Activated T-helper 2 cell treated with anti-CD3 and anti-CD28 coated beads, Interferon-gamma antibody, Interleukin-2, Interleukin-4, amounts not matched to agents 10 μg/mL and 5 μg/mL and 100 μg/mL, durations not matched to agents 14 hours and 24 hours and 36 hours (primary cell): ENCODE measurements at regions of chr19 and their contacts with region 1.

Region 1: DNA sequence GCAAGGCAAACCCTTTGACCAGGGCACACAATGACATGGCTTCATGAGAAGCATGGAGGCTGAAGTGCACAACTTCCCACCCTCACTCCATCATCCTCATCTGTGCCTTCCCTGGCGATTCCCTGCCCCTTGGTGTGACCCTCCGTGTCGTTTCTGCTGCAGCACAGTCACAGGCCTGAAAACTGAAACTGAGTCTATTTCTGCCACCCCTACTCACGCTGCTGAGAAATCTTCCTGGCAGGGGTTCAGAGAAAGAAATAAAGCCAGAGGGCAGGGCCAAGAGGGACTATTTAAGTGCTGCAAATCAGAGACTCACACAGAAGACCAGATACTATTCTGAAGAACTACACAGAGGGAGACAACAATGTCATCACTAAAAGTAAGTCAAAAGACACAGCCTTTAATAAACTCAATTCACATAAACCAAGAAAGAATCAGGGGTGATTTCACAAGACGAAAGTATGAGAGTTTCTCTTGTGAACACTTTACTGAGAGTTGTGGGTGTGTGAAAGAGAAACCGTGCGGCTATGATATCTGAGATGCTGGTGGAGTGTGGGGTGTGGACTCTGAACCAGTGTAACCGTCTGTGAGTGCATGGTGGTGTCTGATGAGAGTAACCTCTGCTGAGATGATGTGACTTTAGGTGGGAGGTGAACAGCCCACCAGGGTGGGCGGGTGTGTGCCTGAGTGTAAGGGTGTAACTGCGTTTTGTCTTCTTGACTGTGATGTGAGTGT is 23.5 kb downstream of the LGALS16 start:
- DNase-seq: peak; percentile 46
- H3K4me3 Mint-ChIP-seq: peak overlapping the region; percentile 55
- H3K27ac Mint-ChIP-seq: peak overlapping the region; percentile 56
- H3K4me1 Mint-ChIP-seq: peaks cover 39% of the 10 kb centered on the region
- H3K27me3 Mint-ChIP-seq: peaks cover 7% of the 10 kb centered on the region

Region 2: GRCh38 chr19:39704181-39705044 is 25.2 kb after region 1 on chr19 and contains the start of gene LGALS14:
- intact Hi-C with region 1: loop called (anchors 1 kb)
- DNase-seq: no peak
- H3K4me3 Mint-ChIP-seq: no peak within 1 kb of the TSS
- H3K27ac Mint-ChIP-seq: peak within 1 kb of the TSS; percentile 56
- H3K4me1 Mint-ChIP-seq: peaks cover 20% of the 10 kb centered on the region
- H3K27me3 Mint-ChIP-seq: peaks cover 19% of the 10 kb centered on the region
- total RNA-seq, gene LGALS14: not detected in 2 replicates

Region 3: DNA sequence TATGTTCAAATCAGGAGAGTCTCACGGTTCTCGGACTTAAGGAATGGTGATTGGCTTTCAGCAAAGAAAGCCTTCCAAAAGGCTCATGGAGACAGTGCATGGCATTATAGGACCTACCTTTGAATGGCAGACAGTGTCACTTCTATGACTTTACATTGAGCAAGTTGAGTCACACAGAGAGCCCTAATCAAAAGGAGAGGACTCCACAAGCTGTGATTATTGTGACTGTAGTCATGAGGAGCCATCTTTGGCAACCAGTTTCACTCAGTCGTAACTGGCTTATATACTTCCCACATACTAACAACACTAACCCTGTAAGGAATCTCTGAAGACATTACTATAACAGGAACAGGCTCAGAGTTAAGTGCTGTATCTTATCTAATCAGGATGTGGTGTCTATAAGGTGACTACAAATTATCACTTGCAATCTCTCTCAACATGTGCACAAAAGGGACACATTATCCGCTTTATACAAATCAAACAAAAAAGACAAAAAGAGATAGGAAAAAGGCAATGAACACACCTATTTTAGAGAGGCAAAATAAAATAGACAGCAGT is 31.2 kb after region 1 on chr19:
- intact Hi-C with region 1: loop called (anchors 2 kb)
- DNase-seq: no peak
- H3K4me3 Mint-ChIP-seq: no peak overlapping the region
- H3K27ac Mint-ChIP-seq: no peak overlapping the region
- H3K4me1 Mint-ChIP-seq: peaks cover 25% of the 10 kb centered on the region
- H3K27me3 Mint-ChIP-seq: peaks cover 13% of the 10 kb centered on the region

Region 4: GRCh38 chr19:39740395-39740794 is 61.2 kb after region 1 on chr19:
- intact Hi-C with region 1: loop called (anchors 1 kb)
- DNase-seq: no peak
- H3K4me3 Mint-ChIP-seq: peak overlapping the region; percentile 42
- H3K27ac Mint-ChIP-seq: peak overlapping the region; percentile 15
- H3K4me1 Mint-ChIP-seq: peaks cover 42% of the 10 kb centered on the region
- H3K27me3 Mint-ChIP-seq: peaks cover 9% of the 10 kb centered on the region

Region 5: DNA sequence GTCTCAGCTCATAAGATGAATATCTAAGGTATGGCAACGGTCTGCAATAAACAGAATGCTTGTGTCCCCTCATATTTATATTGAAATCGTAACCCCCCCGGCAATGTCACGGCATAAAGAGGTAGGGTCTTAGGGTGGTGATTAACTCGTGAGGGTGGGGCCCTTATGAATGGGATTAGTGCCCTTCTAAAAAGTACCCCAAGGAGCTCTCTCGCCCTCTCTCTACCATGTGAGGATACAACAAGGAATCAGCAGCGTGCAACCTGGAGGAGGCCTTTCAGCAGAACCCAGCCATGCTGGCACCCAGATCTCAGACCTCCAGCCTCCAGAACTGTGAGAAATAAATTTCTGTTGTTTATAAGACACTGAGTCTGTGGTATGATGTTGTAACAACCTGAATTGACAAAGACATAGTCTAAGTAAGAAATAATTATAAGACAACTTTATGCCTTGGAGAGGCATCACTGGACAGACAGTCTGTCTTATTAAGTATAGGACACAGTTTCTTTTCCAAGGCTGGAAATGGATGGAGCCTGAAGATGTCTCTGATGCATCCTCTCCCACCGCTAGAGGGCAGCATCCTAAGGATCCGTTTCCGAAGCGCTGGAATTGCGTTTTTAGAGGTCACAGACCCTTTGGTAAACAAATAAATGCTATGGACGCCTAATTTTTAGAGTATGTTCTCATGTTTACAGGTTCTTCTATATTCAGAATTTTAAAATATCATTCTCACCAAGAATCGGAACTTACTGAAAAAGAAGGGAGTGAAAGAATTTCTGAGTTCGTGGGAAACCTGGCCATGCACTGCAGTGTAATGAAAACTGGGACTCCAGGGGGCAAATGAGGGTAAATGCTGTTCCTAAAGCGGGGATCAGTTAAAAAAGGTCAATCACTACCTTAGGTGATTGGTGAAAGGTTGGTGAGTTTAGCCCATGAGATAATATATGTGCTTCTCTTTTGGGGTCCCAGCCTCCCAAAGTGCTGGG is 86.2 kb after region 1 on chr19:
- intact Hi-C with region 1: loop called (anchors 5 kb)
- DNase-seq: no peak
- H3K4me3 Mint-ChIP-seq: no peak overlapping the region
- H3K27ac Mint-ChIP-seq: no peak overlapping the region
- H3K4me1 Mint-ChIP-seq: peaks cover 3% of the 10 kb centered on the region
- H3K27me3 Mint-ChIP-seq: peaks cover 19% of the 10 kb centered on the region